Astrocyte of the cerebellum (primary cell): ENCODE measurements at regions of chr3 and their contacts with region 1.

Region 1: DNA sequence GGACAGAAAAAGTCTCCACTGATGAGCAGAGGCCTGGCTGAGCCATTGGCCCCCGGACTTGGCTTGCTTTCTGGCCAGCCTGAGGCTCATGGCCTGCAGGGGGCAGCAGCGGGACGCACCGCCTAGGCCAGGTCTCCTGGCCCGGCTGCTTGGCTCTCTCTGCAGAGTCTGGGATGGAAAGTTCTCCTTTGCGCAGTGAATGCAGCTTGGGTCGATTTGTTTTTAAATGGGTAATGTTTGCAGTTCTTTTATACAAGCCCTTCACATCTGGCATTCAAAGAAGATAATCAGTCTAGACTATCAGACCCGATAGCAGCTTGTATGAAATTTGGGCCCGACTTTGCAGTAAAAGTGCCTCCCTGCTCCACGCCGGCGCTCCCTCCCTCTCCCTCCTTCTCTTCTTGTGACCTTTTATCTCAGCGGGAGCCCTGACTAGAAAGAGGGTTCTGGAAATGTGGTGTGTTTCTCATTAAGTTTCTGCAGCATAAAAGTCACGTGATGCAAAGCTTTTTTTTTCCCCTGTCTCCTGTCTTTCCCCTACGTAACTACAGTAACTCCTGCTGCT is 59.9 kb downstream of the ZNF621 start:
- DNase-seq: peak; percentile 79
- H3K4me3 ChIP-seq: no peak overlapping the region
- CTCF ChIP-seq: peak; percentile 99

Region 2: GRCh38 chr3:40679290-40679689 is 94.6 kb after region 1 on chr3:
- in situ Hi-C with region 1: no loop called
- DNase-seq: no peak
- H3K4me3 ChIP-seq: no peak overlapping the region
- CTCF ChIP-seq: no peak

Region 3: DNA sequence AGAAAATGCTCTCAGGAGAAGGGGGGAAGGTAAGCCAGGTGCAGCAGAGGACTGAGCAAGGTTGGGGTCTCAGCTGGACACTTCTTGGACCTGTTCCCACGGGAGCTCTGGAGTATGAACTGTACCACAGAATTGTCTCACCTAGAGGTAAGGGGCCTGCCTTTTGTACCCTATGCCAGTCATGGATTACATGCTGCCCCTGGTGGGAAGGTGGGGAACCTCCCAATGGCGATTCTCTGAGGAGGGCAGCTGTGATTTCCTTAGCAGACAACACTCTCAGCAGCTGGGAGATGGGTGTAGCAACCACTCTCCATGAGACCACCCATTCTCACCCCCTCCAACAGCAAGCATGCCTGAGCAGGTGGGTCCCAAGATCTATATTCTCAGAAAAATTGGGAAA is 285.2 kb after region 1 on chr3:
- in situ Hi-C with region 1: loop called (anchors 25 kb)
- DNase-seq: no peak
- H3K4me3 ChIP-seq: no peak overlapping the region
- CTCF ChIP-seq: peak; percentile 46

Region 4: DNA sequence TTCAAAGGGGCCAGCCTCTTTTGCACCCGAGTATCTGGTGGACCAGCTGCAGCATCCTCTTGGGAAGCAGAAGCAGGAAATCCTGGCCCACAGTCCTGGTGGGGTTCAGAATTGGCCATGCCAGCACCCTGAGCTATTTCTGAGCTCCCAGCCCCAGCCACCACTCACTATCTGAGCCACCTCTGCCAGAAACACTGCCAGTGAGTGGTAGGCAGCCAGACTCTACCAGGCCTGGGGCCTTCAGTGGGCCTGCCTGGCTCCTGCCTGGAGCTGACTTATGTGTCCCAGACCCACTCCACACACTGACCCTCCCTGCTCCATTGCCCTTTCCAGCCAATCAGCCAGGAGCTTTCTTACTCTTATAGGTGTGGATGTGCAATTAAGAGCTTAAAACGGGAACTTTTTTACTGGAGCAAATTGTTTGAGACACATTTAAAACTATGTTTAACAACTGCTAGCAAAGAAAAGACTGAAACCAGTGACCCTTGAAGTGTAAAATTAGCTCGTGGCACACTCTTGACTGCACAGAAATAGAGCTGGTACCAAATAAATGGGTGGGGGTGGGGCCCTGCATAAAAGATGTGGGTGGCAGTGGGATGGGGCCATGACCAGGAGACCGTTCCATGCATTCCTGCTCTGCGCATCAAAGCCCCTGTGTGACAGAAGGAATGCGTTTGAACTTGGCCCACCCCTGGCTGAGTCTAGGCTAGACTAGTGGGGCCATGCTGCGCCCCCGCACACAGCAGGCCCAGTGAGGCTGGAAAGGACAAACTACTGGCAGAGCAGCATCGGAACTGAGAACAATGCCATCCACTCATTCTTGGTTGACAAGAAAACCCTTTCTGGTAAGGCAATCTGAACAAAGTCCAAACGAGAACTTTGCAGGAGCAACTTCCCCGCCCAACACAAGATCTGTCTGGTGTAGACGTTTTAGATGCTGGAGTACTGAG is 662.6 kb after region 1 on chr3:
- in situ Hi-C with region 1: loop called (anchors 25 kb)
- DNase-seq: no peak
- H3K4me3 ChIP-seq: no peak overlapping the region
- CTCF ChIP-seq: no peak

Region 5: DNA sequence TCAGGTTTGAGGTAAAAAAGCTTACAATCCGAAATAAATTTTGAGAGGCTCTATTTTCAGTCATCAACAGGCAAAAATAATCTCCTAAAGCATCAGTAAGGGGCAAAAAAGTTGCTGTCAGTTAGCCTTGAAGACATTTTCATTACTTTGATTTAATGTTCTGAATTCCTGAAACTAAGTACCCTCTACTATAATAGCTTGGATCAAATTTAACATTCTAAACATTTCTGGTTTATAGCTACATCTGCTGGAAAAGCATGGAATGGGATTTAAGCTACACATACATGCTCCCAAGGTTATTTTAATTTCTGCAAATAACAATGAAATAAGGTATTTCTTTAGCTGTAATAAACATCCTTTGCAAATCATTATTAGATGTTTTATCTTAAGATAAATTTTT is 1131.8 kb after region 1 on chr3:
- in situ Hi-C with region 1: loop called (anchors 25 kb)
- DNase-seq: peak; percentile 44
- H3K4me3 ChIP-seq: no peak overlapping the region
- CTCF ChIP-seq: peak; percentile 52

Region 6: DNA sequence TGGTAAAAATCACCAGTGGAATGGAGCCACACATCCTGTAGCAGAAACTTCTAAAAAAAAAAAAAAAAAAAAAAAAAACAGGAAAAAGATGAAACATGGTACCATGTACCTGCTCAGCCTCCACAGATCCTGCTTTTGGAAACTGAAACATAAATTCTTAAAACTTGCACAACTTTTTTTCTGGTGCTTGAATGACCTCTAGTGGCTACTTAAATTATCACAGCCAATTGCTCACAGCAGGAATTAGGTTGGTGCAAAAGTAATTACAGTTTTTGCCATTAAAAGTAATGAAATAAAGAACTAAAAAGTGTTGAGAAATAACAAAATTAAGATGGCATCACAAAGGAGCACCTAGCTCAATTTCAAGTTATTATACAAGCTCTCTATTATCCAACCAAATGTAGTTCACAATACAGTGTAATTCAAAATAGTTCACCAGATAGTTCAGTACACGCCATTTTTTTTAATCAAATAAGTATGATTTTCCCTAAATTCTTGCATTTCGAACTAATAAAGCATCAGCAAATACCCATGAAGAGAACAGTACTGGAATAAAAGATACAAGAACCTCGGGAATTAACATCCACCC is 1296.6 kb after region 1 on chr3:
- in situ Hi-C with region 1: loop called (anchors 5 kb)
- DNase-seq: peak; percentile 29
- H3K4me3 ChIP-seq: no peak overlapping the region
- CTCF ChIP-seq: peak; percentile 54